ENCODE measurements at regions of chr11 and their contacts with region 1.

Region 1: GRCh38 chr11:33857933-33858371 is 33.9 kb downstream of the LMO2 start:
- DNase-seq: peak; percentile 78 to 90 (median 83)
- ATAC-seq: peak; percentile 98
- H3K4me3 ChIP-seq: no peak overlapping the region
- H3K27ac ChIP-seq: no peak overlapping the region
- H3K4me1 ChIP-seq: peaks cover 0 to 2% of the 10 kb centered on the region in 2 experiments; a peak in 3 of 5 replicates
- H3K27me3 ChIP-seq: no peaks in the 10 kb centered on the region
- CTCF ChIP-seq: peak; percentile 91 to 98 (median 96)
- EP300 ChIP-seq: no peak
- POLR2A ChIP-seq: peak; percentile 43; the same call in 1 of the 2 replicates
- RAD21 ChIP-seq: peak; percentile 99

Region 2: DNA sequence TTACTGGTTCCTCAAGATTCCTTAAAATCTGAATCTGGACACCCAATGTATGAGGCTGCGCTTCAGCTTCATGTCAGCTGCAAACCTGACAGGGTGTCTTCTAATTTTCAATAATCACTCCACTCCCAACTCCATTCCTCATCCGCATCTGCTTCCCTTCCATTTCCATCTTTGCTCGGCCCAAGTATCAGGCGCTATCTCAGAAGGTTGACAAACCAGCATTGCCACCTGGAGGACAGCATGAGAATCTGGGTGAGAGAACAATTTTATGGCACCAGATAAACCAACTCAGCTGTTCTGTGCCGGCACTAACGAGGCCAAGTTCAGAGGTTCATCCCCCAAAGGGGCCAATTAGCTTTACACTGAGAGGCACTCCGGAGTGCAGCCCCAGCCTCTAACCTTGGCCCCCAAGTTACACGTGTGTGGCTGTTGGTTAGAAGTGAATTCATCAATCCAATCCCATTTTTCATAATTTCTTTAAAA is 113.1 kb after region 1 on chr11:
- CTCF ChIA-PET with region 1: interaction called, 99 read pairs
- POLR2A ChIA-PET with region 1: interaction called, 7 read pairs
- in situ Hi-C with region 1: loop called (anchors 5 kb)
- intact Hi-C with region 1: loop called (anchors 1 kb)
- DNase-seq: peak; percentile 44 to 86 (median 63)
- ATAC-seq: peak; percentile 96
- H3K4me3 ChIP-seq: no peak overlapping the region
- H3K27ac ChIP-seq: no peak overlapping the region
- H3K4me1 ChIP-seq: peaks cover 0 to 4% of the 10 kb centered on the region in 2 experiments; a peak in 3 of 5 replicates
- H3K27me3 ChIP-seq: no peaks in the 10 kb centered on the region
- CTCF ChIP-seq: peak; percentile 88 to 96 (median 88)
- EP300 ChIP-seq: no peak
- POLR2A ChIP-seq: no peak
- RAD21 ChIP-seq: peak; percentile 99 to 100

Measured in K562 (cell line).